HCT116 (cell line): ENCODE measurements at regions of chr18 and their contacts with region 1.

Region 1: DNA sequence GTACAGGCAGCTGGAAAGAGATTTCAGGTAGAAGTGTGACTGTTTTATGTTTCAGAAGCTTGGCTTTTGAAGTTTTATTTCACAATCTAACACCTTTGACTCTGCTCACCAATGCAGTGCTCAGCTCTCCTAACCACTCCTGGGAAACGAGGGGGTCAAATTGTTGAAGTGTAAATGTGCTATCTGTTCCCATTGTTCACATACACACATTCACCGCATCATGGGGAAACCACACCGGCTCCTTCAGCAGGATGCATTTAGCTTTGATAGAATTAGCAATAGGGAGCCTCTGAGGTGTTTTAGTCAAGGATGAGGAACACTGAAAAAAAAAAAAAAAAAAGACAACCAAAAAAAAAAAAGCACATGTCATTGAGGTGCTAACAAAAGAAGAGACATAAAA is 13.4 kb upstream of the DLGAP1 start:
- DNase-seq: no peak
- ATAC-seq: no peak
- H3K4me3 ChIP-seq: no peak overlapping the region
- H3K27ac ChIP-seq: no peak overlapping the region
- H3K4me1 ChIP-seq: no peaks in the 10 kb centered on the region
- H3K27me3 ChIP-seq: no peaks in the 10 kb centered on the region
- CTCF ChIP-seq: no peak
- POLR2A ChIP-seq: no peak
- RAD21 ChIP-seq: no peak

Region 2: DNA sequence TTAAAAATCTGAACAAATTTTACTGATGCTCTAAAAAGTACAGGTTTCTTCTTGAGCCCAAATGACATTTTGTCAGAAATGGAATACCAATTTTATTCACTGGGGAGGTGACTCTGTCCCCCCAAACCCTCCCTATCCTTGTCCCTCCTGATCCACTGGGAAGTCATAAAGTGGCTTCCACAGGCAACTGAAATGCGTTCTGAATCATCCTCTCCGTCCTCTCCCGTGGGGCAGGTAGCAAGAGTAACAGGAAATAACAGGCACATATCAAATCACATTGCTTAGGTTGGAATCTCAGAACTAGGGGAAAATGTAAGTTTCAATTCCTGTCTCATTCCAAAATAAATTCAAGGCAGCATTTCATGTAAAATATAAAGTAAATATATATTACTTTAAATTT is 1162.1 kb before region 1 on chr18:
- CTCF ChIA-PET with region 1: no interaction called
- POLR2A ChIA-PET with region 1: no interaction called
- RAD21 ChIA-PET with region 1: no interaction called
- intact Hi-C with region 1: no loop called
- DNase-seq: no peak
- ATAC-seq: no peak
- H3K4me3 ChIP-seq: no peak overlapping the region
- H3K27ac ChIP-seq: no peak overlapping the region
- H3K4me1 ChIP-seq: peaks cover 0 to 14% of the 10 kb centered on the region in 2 experiments; a peak in 2 of 4 replicates
- H3K27me3 ChIP-seq: no peaks in the 10 kb centered on the region
- CTCF ChIP-seq: no peak
- POLR2A ChIP-seq: no peak
- RAD21 ChIP-seq: no peak

Region 3: DNA sequence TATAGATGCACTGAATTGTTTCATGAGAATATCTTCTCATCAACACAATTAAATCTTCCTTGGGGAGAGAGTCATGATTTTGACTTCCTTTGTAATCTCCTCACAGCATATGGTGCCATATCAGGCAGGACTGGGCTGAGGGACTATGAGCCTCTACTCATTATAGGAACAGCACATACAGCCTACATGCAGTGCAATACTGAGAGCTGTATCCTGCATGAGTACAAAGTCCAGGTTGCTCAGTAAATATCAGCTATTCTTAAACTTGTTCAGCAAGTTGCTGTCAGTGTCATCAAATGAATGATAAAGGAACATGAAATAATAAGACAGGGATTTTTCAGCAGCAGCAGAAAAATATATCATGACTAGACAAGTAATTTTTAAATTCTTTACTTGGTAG is 24.2 kb before region 1 on chr18:
- CTCF ChIA-PET with region 1: no interaction called
- POLR2A ChIA-PET with region 1: no interaction called
- RAD21 ChIA-PET with region 1: no interaction called
- intact Hi-C with region 1: loop called (anchors 2 kb)
- DNase-seq: no peak
- ATAC-seq: no peak
- H3K4me3 ChIP-seq: no peak overlapping the region
- H3K27ac ChIP-seq: no peak overlapping the region
- H3K4me1 ChIP-seq: no peaks in the 10 kb centered on the region
- H3K27me3 ChIP-seq: no peaks in the 10 kb centered on the region
- CTCF ChIP-seq: no peak
- POLR2A ChIP-seq: no peak
- RAD21 ChIP-seq: no peak

Region 4: DNA sequence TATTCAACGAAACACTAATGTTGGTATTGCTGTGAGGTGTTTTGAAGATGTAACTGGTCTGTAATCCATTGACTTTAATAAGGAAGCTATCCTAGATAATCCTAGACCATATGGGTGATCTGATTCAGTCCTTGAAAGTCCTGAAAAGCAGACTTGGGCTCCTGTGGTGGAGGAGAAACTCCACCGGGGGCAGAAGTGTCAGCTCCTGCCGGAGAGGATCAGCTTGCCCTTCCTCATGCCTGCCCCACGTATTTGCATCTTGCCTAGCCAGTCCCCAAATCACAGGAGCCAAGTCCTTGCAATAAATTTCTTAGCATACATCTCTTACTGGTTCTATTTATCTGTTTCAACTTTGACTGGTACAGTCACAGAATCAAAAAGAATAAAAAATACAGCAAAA is 130.8 kb after region 1 on chr18:
- CTCF ChIA-PET with region 1: no interaction called
- POLR2A ChIA-PET with region 1: no interaction called
- RAD21 ChIA-PET with region 1: no interaction called
- intact Hi-C with region 1: no loop called
- DNase-seq: no peak
- ATAC-seq: no peak
- H3K4me3 ChIP-seq: no peak overlapping the region
- H3K27ac ChIP-seq: no peak overlapping the region
- H3K4me1 ChIP-seq: no peaks in the 10 kb centered on the region
- H3K27me3 ChIP-seq: no peaks in the 10 kb centered on the region
- CTCF ChIP-seq: no peak
- POLR2A ChIP-seq: no peak
- RAD21 ChIP-seq: no peak

Region 5: DNA sequence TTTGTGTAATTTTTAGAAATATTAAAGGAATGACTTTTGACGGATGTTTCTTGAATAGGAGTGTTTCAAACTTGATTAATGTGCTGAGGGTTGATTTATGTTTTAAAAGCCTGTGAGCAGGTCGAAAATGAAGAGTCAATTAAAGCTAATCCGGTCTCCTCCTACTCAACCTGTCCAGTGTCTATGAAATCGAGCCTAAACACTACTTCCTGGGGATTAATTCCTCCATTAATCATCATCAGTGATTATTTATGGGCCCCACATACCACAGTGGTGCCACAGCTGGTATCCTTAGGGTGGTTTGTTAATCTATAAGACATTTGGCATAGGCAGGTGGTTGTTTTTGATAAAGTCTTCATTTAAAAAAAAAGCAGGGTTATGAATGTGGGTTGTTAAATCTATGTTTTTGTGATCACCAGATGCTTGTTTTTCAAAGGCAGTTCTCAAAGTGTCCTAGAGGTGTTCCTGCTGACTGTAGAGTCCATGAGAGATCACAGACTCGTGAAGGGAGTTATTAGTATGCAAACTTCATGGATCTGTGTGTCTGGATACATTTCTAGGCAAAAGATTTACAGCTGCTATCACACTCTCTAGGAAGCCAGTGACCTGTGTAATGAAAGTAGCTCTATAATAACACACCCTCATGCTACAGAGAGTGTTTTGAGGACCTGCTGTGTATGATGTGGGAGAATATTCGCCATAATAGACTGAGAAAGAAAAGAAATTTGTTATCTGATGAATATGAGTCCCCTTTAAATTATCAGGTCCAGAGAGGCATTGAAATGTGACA is 419.9 kb after region 1 on chr18:
- CTCF ChIA-PET with region 1: no interaction called
- POLR2A ChIA-PET with region 1: no interaction called
- RAD21 ChIA-PET with region 1: no interaction called
- intact Hi-C with region 1: no loop called
- DNase-seq: no peak
- ATAC-seq: no peak
- H3K4me3 ChIP-seq: no peak overlapping the region
- H3K27ac ChIP-seq: no peak overlapping the region
- H3K4me1 ChIP-seq: no peaks in the 10 kb centered on the region
- H3K27me3 ChIP-seq: no peaks in the 10 kb centered on the region
- CTCF ChIP-seq: no peak
- POLR2A ChIP-seq: no peak
- RAD21 ChIP-seq: no peak